Activated naive CD4-positive, alpha-beta T cell treated with anti-CD3 and anti-CD28 coated beads for 36 hours (primary cell): ENCODE measurements at regions of chr1 and their contacts with region 1.

Region 1: GRCh38 chr1:46166521-46167462 is 8.1 kb upstream of the TSPAN1 start:
- DNase-seq: peak; percentile 72
- H3K4me3 Mint-ChIP-seq: peak overlapping the region; percentile 75
- H3K27ac Mint-ChIP-seq: peak overlapping the region; percentile 79
- H3K4me1 Mint-ChIP-seq: peaks cover 14% of the 10 kb centered on the region
- H3K27me3 Mint-ChIP-seq: peaks cover 4% of the 10 kb centered on the region

Region 2: DNA sequence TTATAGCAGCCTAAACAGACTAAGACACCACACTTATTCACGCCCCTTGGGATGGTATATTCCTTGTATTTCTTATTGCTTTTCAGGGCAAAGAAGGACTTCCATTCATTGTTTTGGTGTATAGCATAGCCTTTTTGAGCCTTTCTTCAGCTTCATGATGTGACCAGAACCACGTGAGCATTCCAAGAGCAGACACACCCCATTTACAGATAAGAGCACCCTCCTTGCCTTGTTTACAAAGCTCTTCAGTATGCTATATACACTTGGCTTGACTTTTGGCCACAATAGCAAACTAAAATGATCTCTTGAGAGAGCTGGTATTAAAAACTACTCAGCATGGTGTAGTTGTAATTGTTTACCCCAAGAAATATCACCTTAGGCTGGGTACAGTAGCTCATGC is 113.1 kb before region 1 on chr1:
- CTCF ChIA-PET with region 1: no interaction called
- intact Hi-C with region 1: no loop called
- DNase-seq: no peak
- H3K4me3 Mint-ChIP-seq: no peak overlapping the region
- H3K27ac Mint-ChIP-seq: no peak overlapping the region
- H3K4me1 Mint-ChIP-seq: no peaks in the 10 kb centered on the region
- H3K27me3 Mint-ChIP-seq: no peaks in the 10 kb centered on the region

Region 3: DNA sequence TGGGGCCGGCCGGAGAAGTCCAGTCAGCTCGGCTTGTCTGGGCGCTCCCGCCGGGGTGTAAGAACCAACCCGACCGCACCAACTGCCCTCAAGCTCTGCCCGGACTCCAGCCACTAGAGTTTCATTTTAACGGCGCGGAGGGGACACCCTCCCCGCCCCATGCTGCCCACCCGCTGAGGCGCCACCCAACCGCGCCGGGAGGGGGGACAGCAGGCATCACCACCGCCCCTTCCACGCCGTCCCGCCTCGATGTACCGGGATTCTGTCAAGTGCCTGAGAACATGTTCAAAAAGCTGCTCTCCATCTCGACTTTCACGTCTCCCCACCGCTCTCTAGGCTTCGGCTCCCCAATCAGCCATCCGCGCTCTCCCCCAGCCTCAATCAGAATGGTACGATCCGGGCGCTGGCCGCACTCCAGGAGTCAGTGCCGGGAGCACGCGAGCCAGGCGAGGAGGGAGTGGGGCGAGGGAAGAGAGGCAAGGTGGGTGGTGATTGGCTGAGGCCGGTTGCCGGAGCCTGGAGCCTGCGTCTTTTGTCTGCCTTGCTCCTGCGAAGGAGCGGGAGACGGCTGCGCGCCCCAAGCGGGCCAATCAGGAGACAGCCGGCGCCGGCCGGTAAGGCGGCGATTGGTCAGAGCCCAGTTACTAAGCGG is 34.1 kb before region 1 on chr1 and contains the start of gene PIK3R3:
- CTCF ChIA-PET with region 1: no interaction called
- intact Hi-C with region 1: loop called (anchors 2 kb)
- DNase-seq: peak; percentile 90
- H3K4me3 Mint-ChIP-seq: peak within 1 kb of the TSS; percentile 84
- H3K27ac Mint-ChIP-seq: peak within 1 kb of the TSS; percentile 56
- H3K4me1 Mint-ChIP-seq: peaks cover 19% of the 10 kb centered on the region
- H3K27me3 Mint-ChIP-seq: peaks cover 50% of the 10 kb centered on the region
- total RNA-seq, gene PIK3R3: 0.45 to 0.49 TPM

Region 4: DNA sequence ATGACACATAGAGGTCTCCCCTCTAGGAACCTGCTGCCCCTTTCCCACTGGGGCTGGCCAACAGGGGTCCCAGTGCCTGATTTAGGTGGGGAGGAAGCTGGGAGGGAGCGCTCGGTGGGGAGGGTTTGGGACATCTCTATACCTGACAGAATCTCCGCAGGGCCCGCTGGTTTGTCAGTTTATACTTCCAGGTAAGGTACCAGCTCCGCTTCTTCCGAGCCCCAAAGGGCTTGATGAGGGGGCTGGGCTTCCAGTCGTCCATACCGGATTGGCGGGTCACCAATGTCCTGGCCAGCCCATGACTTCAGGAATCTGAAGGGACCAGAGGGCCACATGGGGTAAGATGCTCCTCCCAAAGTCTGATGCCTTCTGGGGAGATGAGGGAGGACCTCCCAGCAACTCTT is 30.8 kb after region 1 on chr1:
- CTCF ChIA-PET with region 1: no interaction called
- intact Hi-C with region 1: no loop called
- DNase-seq: no peak
- H3K4me3 Mint-ChIP-seq: peak overlapping the region; percentile 81
- H3K27ac Mint-ChIP-seq: no peak overlapping the region
- H3K4me1 Mint-ChIP-seq: peaks cover 24% of the 10 kb centered on the region
- H3K27me3 Mint-ChIP-seq: no peaks in the 10 kb centered on the region